ENCODE measurements at regions of chr9 and their contacts with region 1.

Region 1: DNA sequence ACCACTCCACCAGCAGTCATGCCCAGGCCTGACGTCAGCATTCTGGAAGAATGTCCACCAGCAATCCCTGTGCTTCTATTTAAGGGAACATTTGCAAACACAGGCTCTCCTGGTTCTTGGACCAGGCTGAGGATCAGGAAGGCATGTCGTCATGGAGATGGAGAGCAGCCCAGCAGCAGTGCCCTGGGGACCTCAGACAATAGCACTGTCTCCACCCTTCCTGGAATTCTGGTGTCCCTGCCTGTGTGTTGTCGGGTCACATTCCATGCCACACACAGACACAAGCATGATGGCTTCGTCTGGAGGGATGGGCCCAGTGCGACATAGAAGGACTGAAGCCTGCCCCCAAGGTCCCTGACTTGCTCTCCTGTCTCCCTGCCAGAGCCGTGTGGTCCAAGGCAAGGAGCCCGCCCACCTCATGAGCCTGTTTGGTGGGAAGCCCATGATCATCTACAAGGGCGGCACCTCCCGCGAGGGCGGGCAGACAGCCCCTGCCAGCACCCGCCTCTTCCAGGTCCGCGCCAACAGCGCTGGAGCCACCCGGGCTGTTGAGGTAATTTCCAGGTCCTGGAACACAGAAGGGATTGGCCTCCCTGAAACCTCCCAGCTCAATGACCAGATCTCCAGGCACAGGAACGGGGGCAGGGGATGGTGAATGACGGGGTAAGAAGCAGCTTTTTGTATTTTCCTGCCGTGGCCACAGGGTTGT is 43.8 kb downstream of the STOM start:
- DNase-seq: peak; percentile 83
- H3K4me3 ChIP-seq: no peak overlapping the region
- H3K27ac ChIP-seq: peak overlapping the region; percentile 50
- H3K4me1 ChIP-seq: peaks cover 28% of the 10 kb centered on the region
- H3K27me3 ChIP-seq: no peaks in the 10 kb centered on the region
- CTCF ChIP-seq: no peak
- POLR2A ChIP-seq: no peak

Region 2: GRCh38 chr9:120904061-120904977 is 422.0 kb before region 1 on chr9:
- CTCF ChIA-PET with region 1: no interaction called
- POLR2A ChIA-PET with region 1: no interaction called
- dilution Hi-C with region 1: no loop called
- intact Hi-C with region 1: no loop called
- DNase-seq: no peak
- H3K4me3 ChIP-seq: no peak overlapping the region
- H3K27ac ChIP-seq: no peak overlapping the region
- H3K4me1 ChIP-seq: no peaks in the 10 kb centered on the region
- H3K27me3 ChIP-seq: peaks cover 0 to 3% of the 10 kb centered on the region in 2 experiments
- CTCF ChIP-seq: no peak
- POLR2A ChIP-seq: no peak

Region 3: DNA sequence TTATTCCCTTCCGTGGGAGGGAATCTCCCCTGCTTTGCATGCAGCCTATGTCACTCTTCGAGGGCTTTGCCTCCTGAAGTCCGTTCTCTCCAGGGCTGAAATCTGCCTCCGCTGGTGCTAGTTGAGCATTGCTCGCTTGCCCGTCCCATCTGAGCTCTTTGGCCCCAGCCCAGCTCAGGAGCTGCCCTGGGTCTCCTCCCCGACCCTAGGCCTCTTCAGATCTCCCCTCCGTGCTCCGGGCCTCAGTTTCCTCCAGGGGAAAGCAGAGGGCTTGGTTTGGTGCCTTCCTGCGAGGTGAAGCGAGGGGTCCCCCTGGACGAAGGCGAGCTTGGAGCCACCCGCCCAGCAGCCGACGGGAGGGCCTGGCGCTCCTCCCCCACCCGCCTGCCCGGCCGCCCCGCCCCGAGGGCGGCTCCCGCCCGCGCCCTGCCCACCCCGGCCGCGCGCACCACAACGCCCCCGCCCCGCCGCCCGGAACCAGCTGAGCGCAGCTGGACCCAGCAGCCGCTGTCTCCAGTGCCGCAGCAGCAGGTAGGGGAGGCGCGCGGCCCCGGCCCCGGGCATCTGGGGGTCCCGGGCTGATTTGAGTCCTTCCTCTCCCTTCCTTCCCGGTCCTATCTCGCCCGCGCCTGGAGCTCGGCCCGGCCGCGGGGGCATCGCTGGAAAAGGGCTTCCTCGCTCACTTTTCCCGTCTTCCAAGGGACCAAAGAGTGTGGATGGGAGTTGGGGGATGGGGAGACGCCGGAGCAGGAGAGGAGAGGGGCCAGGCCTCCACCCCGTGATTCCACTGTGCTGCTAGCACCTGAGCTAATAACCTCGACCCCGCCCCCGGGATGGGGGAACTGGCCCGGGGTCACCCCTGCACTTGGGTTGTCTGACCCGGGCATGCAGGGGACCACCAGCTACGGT is 58.3 kb before region 1 on chr9 and contains the start of gene GSN:
- CTCF ChIA-PET with region 1: no interaction called
- POLR2A ChIA-PET with region 1: no interaction called
- dilution Hi-C with region 1: no loop called
- intact Hi-C with region 1: no loop called
- DNase-seq: peak; percentile 68
- H3K4me3 ChIP-seq: peak within 1 kb of the TSS; percentile 51 to 86 (median 81)
- H3K27ac ChIP-seq: no peak within 1 kb of the TSS
- H3K4me1 ChIP-seq: peaks cover 16% of the 10 kb centered on the region
- H3K27me3 ChIP-seq: peaks cover 0 to 2% of the 10 kb centered on the region in 2 experiments
- CTCF ChIP-seq: no peak
- POLR2A ChIP-seq: no peak
- total RNA-seq, gene GSN: 130 and 176 TPM in 2 replicates

Region 4: DNA sequence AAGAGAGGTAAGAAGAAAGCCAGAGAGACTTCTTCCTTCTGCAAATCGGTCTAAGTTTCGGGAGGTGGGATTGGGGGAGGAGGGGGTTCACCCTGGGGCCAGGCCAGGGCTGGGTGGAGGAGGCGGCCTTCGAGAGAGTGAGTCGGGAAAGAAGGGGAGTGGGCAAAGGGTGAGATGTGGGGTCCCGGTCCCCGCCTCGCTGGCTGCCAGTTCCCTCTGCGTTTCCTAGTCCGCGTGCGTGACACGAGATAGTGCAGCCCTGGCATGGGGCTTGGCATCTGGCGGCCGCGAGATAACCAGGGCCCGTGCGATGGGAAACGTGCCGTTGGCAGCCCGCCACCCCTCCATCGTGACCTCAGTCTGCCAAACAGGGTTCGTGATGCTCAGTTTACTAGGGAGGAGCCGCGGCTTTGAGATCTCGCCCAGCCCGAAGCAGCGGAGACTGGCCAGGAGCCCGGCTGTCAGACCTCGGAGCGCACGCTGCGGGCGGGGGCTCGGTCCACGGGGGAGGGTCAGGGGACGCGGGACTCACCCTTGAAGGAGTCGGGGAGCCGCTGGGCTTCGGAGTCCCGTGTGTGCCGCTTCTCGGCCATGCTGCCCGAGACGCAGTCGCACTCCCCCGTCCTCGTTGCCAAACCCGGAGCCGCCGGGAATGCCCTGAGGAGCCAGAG is 43.4 kb after region 1 on chr9 and contains the start of gene STOM:
- CTCF ChIA-PET with region 1: interaction called, 116 read pairs
- POLR2A ChIA-PET with region 1: no interaction called
- dilution Hi-C with region 1: no loop called
- intact Hi-C with region 1: loop called (anchors 1 kb)
- DNase-seq: peak; percentile 89
- H3K4me3 ChIP-seq: peak within 1 kb of the TSS; percentile 66 to 88 (median 78)
- H3K27ac ChIP-seq: peak within 1 kb of the TSS; percentile 93
- H3K4me1 ChIP-seq: peaks cover 43% of the 10 kb centered on the region
- H3K27me3 ChIP-seq: no peaks in the 10 kb centered on the region
- CTCF ChIP-seq: no peak
- POLR2A ChIP-seq: peak; percentile 98
- total RNA-seq, gene STOM: 138 and 170 TPM in 2 replicates

Region 5: GRCh38 chr9:121393318-121393717 is 67.0 kb after region 1 on chr9:
- CTCF ChIA-PET with region 1: interaction called, 211 read pairs
- POLR2A ChIA-PET with region 1: no interaction called
- dilution Hi-C with region 1: no loop called
- intact Hi-C with region 1: loop called (anchors 1 kb)
- DNase-seq: peak; percentile 47
- H3K4me3 ChIP-seq: no peak overlapping the region
- H3K27ac ChIP-seq: no peak overlapping the region
- H3K4me1 ChIP-seq: peaks cover 28% of the 10 kb centered on the region
- H3K27me3 ChIP-seq: no peaks in the 10 kb centered on the region
- CTCF ChIP-seq: no peak
- POLR2A ChIP-seq: peak; percentile 37

Region 6: DNA sequence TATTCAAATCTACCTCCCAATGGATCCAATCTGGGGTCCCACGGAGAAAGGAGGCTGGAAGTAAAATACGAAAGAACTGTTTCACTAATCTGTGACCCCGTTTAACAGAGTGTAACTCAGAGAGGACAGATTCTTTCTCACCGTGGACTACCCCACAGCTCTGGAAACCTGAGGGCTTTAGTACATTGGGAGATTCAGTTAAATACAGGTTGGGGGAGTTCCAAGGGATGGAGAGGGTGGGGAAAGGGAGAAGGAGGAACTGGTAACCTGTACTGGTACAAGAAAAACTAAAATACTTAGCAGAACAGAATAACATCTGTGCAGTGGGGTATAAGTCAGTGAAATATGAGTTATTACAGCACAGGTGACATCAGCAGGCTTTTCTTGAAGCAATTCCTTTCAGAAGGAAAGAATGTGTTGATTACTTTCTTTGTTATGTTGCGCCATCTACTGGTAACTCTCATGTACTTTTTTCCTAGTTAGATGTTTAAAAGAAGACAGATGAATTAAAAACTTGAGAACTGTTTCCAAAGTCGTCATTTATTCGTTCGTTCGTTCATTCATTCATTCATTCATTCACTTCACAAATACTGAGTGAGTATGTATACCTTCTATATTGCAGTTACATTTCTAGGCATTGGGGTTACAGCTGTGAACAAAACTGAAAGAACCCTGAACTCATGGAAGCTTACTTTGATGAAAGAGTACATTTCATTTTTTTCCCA is 73.8 kb after region 1 on chr9:
- CTCF ChIA-PET with region 1: interaction called, 211 read pairs
- POLR2A ChIA-PET with region 1: no interaction called
- dilution Hi-C with region 1: no loop called
- intact Hi-C with region 1: no loop called
- DNase-seq: peak; percentile 82
- H3K4me3 ChIP-seq: no peak overlapping the region
- H3K27ac ChIP-seq: no peak overlapping the region
- H3K4me1 ChIP-seq: peaks cover 21% of the 10 kb centered on the region
- H3K27me3 ChIP-seq: no peaks in the 10 kb centered on the region
- CTCF ChIP-seq: peak; percentile 25 to 35
- POLR2A ChIP-seq: no peak

Measured in endothelial cell of umbilical vein (primary cell).